IMR-90 (cell line): ENCODE measurements at regions of chr5 and their contacts with region 1.

Region 1: DNA sequence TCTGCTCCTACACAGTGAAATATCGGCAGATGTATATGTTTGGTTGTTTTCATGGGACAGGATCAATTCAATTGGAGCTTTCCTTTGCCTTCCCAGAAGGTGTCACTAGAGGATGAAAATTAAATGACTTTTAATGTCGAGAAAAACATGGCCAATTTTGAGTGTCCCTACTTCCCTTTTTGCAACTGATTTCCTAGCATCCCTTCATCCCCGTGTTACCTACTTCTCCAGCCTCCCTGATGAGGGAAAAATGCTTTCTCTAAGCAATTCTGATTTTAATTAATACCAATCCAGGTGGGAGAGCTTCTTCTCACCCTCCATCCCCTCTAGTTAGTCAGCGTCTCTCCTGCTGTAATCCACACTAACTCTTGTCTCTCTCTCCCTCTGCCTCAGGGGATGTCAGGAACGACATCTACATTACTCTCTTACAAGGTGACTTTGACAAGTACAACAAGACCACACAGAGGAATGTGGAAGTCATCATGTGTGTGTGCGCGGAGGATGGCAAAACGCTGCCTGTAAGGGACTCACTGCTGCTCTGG is 64.9 kb downstream of the DOCK2 start:
- DNase-seq: peak; percentile 64
- ATAC-seq: peak; percentile 72
- H3K4me3 ChIP-seq: no peak overlapping the region
- H3K27ac ChIP-seq: no peak overlapping the region
- H3K4me1 ChIP-seq: peaks cover 24% of the 10 kb centered on the region
- H3K27me3 ChIP-seq: no peaks in the 10 kb centered on the region
- CTCF ChIP-seq: peak; percentile 80
- POLR2A ChIP-seq: no peak
- RAD21 ChIP-seq: peak; percentile 78

Region 2: GRCh38 chr5:169494941-169495548 is 206.9 kb before region 1 on chr5:
- CTCF ChIA-PET with region 1: no interaction called
- POLR2A ChIA-PET with region 1: no interaction called
- dilution Hi-C with region 1: no loop called
- in situ Hi-C with region 1: no loop called
- intact Hi-C with region 1: no loop called
- DNase-seq: no peak
- ATAC-seq: no peak
- H3K4me3 ChIP-seq: no peak overlapping the region
- H3K27ac ChIP-seq: no peak overlapping the region
- H3K4me1 ChIP-seq: no peaks in the 10 kb centered on the region
- H3K27me3 ChIP-seq: no peaks in the 10 kb centered on the region
- CTCF ChIP-seq: no peak
- POLR2A ChIP-seq: no peak
- RAD21 ChIP-seq: no peak

Region 3: DNA sequence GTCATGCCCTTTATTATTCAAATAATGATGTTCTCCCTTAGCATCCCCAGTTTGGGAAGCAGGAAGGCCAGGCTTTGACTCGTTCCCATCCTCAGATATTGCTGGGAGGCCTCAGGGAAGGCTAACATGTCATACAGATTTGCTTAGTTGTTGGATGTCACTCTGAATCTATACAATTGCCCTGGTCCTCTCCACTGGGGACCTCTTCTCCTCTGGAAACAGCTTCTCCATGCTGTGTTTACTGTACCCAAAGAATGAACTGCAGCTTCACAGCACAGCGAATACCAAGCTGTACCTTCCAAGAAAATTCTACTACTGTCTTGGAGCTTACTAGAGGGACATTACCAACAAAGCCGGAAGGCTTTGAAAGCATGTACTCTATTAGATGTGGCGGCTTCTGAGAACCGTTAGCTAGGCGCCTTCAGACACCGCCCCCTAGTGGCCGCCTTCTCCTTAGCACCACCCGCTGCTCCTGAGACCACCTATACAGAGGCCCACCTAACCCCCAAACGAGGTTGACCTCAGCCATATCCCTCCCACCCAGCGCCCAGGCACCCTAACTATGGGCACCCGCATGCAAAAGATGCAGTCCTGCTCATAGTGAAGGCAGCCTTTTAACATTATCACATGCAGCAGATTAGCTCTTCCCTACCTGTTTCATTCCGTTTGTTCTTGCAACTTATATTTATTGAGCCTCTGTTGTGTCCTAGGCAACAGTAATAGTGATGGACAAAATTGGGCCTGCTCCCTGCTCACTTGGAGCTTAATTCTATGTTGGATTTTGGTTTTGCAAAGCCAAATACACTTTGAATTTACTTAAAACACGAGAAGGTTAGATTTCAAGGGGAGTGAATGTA is 368.8 kb after region 1 on chr5:
- CTCF ChIA-PET with region 1: interaction called, 15 read pairs
- POLR2A ChIA-PET with region 1: no interaction called
- dilution Hi-C with region 1: no loop called
- in situ Hi-C with region 1: no loop called
- intact Hi-C with region 1: loop called (anchors 1 kb)
- DNase-seq: peak; percentile 45
- ATAC-seq: peak; percentile 97
- H3K4me3 ChIP-seq: no peak overlapping the region
- H3K27ac ChIP-seq: no peak overlapping the region
- H3K4me1 ChIP-seq: no peaks in the 10 kb centered on the region
- H3K27me3 ChIP-seq: peaks cover 4% of the 10 kb centered on the region
- CTCF ChIP-seq: peak; percentile 62
- POLR2A ChIP-seq: no peak
- RAD21 ChIP-seq: peak; percentile 72